Motor neuron (in vitro differentiated cells): ENCODE measurements at regions of chr5 and their contacts with region 1.

Region 1: DNA sequence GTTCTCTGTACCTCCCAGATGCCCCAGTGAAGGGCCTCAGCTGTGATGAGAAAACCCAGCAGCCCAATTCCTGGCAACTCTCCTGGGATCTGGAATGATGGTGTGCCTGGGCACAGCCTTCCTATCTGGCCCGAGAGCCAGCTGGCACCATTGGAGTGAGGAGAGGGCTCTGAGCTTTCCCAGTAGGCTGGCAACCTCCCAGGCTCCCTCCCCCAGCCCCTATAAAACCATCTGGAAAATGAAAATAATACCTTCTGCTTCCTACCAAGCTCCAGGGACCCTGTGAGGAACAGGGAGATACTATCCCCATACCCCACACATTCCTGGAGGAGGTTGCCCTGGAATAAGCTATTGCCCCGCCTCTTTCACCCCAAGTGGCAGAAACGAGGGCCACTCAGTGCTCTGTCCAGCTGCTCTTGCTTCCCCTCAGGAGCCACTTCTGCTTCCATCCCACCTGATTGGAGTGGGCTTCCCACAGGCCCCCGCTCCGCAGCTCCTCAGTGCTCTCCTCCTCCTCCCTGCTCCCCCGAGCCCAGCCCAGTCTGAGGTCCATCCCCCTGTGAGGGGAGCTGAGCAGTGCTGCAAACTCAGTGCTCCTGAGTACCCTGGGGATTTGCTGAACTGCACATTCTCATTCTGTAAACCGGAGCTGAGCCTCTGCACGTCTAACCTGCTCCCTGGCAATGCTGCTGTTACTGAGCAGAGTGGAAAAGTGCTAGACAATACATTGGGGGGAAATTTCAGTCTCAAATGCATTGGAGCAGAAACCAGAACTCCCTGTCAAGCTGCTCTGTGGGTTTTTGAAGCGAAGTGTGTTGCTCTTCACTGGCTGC is 74.7 kb downstream of the THBS4 start:
- ATAC-seq: peak in 5 of 8 experiments; percentile 65 to 94 (median 75)
- H3K4me3 ChIP-seq: no peak overlapping the region
- H3K27ac ChIP-seq: no peak overlapping the region
- H3K4me1 ChIP-seq: peaks cover 12 to 17% of the 10 kb centered on the region in 2 donors

Region 2: DNA sequence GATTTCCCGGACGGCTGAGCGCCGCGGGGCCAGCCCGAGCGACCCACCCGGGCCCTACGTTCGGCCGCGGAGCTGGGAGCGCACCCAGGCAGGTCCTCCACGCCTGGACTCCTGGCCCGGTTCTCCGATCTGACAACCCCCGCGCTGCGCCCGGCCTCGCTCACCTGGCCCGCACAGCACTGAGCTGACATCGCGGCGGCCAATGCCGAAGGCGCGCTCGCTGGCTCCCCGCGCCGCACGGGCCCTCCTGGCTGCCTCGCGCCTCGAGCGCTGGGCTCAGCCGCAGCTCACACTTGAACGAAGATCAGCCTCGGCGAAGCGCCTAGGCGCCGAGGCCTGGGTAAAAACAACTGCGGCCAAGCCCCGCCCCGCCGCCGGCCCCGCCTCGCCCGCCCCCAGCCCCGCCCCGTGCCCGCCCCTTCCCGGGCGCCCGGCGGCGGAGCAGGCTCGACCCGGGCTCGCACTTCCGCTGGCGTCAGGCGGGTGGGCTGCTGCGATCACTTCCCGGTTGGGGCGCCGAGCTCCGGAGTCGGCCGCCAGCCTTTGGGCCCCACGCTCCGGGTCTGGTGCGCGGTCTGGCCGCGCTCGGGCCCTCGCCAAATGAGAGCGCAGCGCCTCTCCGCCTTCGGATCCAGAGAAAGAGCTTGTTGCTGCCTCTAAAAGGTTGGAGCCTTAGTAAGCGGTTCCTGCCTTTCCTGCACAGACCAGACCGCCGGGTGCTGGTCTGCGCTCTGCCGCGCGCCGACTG is 146.0 kb after region 1 on chr5 and contains the start of gene SERINC5:
- in situ Hi-C with region 1: loop called in 1 of 9 experiments (anchors 25 kb)
- ATAC-seq: peak; percentile 67 to 84 (median 80)
- H3K4me3 ChIP-seq: peak within 1 kb of the TSS; percentile 58 to 75 (median 64)
- H3K27ac ChIP-seq: peak within 1 kb of the TSS; percentile 71 to 86
- H3K4me1 ChIP-seq: peaks cover 12 to 25% of the 10 kb centered on the region in 2 donors
- total RNA-seq, gene SERINC5: 6.5 to 16.5 (median 8.1) TPM

Region 3: DNA sequence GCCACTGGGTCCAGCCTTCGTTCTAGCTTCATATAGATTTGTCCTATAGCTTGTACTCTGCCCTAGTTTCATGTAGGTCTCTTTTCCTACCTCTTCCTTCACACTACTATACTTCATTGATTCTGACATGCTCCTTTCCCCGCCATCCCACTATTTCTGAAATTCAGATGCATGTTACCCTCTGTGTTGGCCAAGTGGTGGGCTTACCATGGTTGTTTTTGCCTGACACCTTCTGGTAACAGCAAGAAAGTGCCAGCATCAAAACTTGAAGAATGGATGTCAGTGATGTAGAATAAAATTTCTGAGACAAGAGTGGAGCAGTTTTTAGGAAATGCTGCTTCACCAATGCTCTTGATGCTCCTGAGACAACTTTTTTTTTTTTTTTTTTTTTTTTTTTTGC is 165.5 kb after region 1 on chr5:
- in situ Hi-C with region 1: loop called in 2 of 9 experiments (anchors 25 kb)
- ATAC-seq: peak in 2 of 8 experiments; percentile 24 to 42
- H3K4me3 ChIP-seq: no peak overlapping the region
- H3K27ac ChIP-seq: no peak overlapping the region
- H3K4me1 ChIP-seq: no peaks in the 10 kb centered on the region

Region 4: GRCh38 chr5:80644900-80645299 is 535.0 kb after region 1 on chr5:
- in situ Hi-C with region 1: no loop called
- ATAC-seq: no peak
- H3K4me3 ChIP-seq: no peak overlapping the region
- H3K27ac ChIP-seq: no peak overlapping the region
- H3K4me1 ChIP-seq: no peaks in the 10 kb centered on the region